ENCODE measurements at regions of chr3 and their contacts with region 1.

Region 1: DNA sequence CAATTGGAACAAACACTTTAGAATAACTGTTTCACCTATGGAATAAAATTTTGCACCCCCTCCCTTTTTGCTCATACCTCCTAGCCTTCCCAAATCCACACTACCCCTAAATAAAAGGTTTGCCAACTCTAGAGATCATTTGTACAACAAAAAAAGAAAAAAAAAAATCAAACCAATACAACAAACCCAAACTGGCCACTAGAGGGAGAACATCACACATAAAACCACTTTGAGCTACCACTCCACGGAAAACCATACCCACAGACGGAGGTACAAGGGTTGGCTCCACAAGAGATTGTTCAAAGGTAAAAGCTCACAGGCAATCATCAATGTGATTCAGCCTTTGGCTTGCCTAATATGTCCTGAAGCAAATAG is 47.6 kb downstream of the SETMAR start:
- DNase-seq: peak; percentile 59
- H3K4me3 Mint-ChIP-seq: peak overlapping the region; percentile 42
- H3K27ac Mint-ChIP-seq: peak overlapping the region; percentile 54
- H3K4me1 Mint-ChIP-seq: peaks cover 17% of the 10 kb centered on the region
- H3K27me3 Mint-ChIP-seq: no peaks in the 10 kb centered on the region

Region 2: DNA sequence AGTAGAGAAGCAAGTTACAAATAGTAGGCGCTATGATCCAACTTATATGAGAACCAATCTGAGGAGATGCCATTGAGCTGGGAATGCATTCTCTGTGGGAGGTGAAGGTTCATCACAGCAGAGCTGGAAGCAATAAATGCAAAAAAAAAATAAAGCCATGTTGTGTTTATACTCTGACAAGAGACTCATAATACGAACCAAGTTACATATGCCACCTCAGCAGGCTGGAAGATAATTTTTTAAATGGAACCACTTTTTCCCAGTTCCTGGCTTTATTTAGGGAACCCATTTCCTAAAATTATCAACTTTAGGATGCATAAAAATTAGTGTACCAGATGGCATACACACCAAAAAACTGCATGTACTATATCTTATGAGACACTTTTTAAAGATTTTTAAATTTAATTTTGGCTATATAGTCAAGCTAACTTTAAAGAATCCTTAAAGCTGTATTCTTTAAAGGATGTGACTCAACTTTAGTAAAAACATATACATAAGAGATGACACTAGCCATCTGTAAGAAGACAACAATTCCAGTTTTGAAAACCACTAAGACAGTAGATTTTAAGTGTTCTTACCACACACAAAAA is 71.2 kb before region 1 on chr3:
- CTCF ChIA-PET with region 1: no interaction called
- intact Hi-C with region 1: no loop called
- DNase-seq: no peak
- H3K4me3 Mint-ChIP-seq: no peak overlapping the region
- H3K27ac Mint-ChIP-seq: no peak overlapping the region
- H3K4me1 Mint-ChIP-seq: no peaks in the 10 kb centered on the region
- H3K27me3 Mint-ChIP-seq: no peaks in the 10 kb centered on the region

Region 3: GRCh38 chr3:4340411-4341335 is 10.1 kb before region 1 on chr3:
- CTCF ChIA-PET with region 1: interaction called, 21 read pairs
- intact Hi-C with region 1: no loop called
- DNase-seq: no peak
- H3K4me3 Mint-ChIP-seq: no peak overlapping the region
- H3K27ac Mint-ChIP-seq: no peak overlapping the region
- H3K4me1 Mint-ChIP-seq: peaks cover 4% of the 10 kb centered on the region
- H3K27me3 Mint-ChIP-seq: no peaks in the 10 kb centered on the region

Region 4: DNA sequence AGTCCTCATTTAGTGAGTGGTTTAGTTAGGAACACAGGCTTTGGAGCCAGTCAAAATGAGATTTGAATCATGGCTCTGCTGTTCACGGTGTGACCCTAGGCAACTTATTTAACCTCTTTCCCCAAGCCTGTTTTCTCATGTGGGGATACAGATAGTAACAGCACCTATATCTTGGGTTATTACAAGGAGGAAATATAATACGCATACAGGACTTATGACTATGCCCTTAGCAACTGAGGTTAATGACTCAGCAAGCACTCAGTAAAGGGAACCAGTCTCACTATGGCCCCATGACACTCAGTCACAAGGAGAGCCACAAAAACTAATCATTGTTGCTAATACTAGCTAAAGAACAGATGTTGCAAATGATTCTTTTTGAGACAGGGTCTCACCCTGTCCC is 70.3 kb after region 1 on chr3:
- CTCF ChIA-PET with region 1: interaction called, 10 read pairs
- intact Hi-C with region 1: loop called (anchors 1 kb)
- DNase-seq: peak; percentile 39
- H3K4me3 Mint-ChIP-seq: no peak overlapping the region
- H3K27ac Mint-ChIP-seq: no peak overlapping the region
- H3K4me1 Mint-ChIP-seq: peaks cover 19% of the 10 kb centered on the region
- H3K27me3 Mint-ChIP-seq: no peaks in the 10 kb centered on the region

Region 5: GRCh38 chr3:4524088-4525023 is 173.6 kb after region 1 on chr3:
- CTCF ChIA-PET with region 1: interaction called, 20 read pairs
- intact Hi-C with region 1: loop called (anchors 1 kb)
- DNase-seq: no peak
- H3K4me3 Mint-ChIP-seq: no peak overlapping the region
- H3K27ac Mint-ChIP-seq: no peak overlapping the region
- H3K4me1 Mint-ChIP-seq: peaks cover 12% of the 10 kb centered on the region
- H3K27me3 Mint-ChIP-seq: no peaks in the 10 kb centered on the region

Region 6: GRCh38 chr3:4633078-4634004 is 282.6 kb after region 1 on chr3:
- CTCF ChIA-PET with region 1: interaction called, 66 read pairs
- intact Hi-C with region 1: loop called (anchors 1 kb)
- DNase-seq: no peak
- H3K4me3 Mint-ChIP-seq: no peak overlapping the region
- H3K27ac Mint-ChIP-seq: no peak overlapping the region
- H3K4me1 Mint-ChIP-seq: peaks cover 3% of the 10 kb centered on the region
- H3K27me3 Mint-ChIP-seq: no peaks in the 10 kb centered on the region

Region 7: GRCh38 chr3:5122030-5122740 is 771.4 kb after region 1 on chr3 and contains the start of gene ARL8B:
- CTCF ChIA-PET with region 1: no interaction called
- intact Hi-C with region 1: loop called (anchors 2 kb)
- DNase-seq: peak; percentile 94
- H3K4me3 Mint-ChIP-seq: peak within 1 kb of the TSS; percentile 90
- H3K27ac Mint-ChIP-seq: peak within 1 kb of the TSS; percentile 90
- H3K4me1 Mint-ChIP-seq: peaks cover 39% of the 10 kb centered on the region
- H3K27me3 Mint-ChIP-seq: no peaks in the 10 kb centered on the region
- total RNA-seq, gene ARL8B: 38.4 to 39.3 TPM